Activated CD4-positive, alpha-beta memory T cell treated with anti-CD3 and anti-CD28 coated beads, Interleukin-2, amount 10 ng/mL, durations not matched to agents 7 days and 5 days (primary cell): ENCODE measurements at regions of chr13 and their contacts with region 1.

Region 1: GRCh38 chr13:33610471-33611015 is 207.4 kb upstream of the RFC3 start:
- DNase-seq: peak; percentile 78
- H3K4me3 Mint-ChIP-seq: peak overlapping the region; percentile 80
- H3K27ac Mint-ChIP-seq: peak overlapping the region; percentile 97
- H3K4me1 Mint-ChIP-seq: peaks cover 41% of the 10 kb centered on the region
- H3K27me3 Mint-ChIP-seq: no peaks in the 10 kb centered on the region

Region 2: DNA sequence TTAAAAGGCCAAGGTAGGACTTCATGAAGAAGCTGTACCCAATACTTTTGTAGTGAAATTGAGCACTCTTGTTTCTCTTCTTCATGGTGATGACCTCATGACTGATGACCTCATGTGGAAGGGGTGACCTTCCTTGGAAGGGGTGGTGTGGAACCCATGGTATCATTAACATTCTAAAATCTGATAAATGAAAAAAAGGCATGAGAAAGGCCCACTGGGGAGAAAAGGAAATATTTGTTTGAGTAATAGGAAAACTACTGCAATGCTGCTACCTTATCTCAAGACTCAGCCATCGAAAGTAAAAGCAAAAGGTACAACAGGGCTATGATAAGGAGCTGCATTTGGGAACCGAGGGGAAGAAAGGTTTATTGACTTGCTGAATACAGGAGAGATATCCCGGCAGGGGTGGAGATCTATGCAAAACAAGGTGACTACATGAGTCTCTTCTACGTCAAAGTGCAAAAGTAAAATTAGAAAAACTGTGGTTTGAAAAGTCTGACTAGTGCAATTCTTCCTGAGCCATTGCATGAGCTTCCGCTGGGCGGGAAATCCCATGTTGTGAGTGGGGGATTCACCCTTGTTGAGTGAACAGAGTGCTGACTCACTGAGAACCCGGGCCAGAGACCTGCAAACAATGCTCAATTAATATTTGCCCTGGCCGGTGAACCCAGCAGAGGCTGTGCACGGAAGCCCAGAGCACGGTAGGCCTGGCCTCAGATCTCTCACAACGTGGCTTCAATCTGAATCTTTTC is 68.5 kb after region 1 on chr13:
- CTCF ChIA-PET with region 1: no interaction called
- POLR2A ChIA-PET with region 1: interaction called, 15 read pairs
- DNase-seq: peak; percentile 82
- H3K4me3 Mint-ChIP-seq: peak overlapping the region; percentile 75
- H3K27ac Mint-ChIP-seq: peak overlapping the region; percentile 86
- H3K4me1 Mint-ChIP-seq: peaks cover 48% of the 10 kb centered on the region
- H3K27me3 Mint-ChIP-seq: no peaks in the 10 kb centered on the region